Heart right ventricle (tissue), 16 donors: ENCODE measurements at regions of chr16 and their contacts with region 1.

Region 1: DNA sequence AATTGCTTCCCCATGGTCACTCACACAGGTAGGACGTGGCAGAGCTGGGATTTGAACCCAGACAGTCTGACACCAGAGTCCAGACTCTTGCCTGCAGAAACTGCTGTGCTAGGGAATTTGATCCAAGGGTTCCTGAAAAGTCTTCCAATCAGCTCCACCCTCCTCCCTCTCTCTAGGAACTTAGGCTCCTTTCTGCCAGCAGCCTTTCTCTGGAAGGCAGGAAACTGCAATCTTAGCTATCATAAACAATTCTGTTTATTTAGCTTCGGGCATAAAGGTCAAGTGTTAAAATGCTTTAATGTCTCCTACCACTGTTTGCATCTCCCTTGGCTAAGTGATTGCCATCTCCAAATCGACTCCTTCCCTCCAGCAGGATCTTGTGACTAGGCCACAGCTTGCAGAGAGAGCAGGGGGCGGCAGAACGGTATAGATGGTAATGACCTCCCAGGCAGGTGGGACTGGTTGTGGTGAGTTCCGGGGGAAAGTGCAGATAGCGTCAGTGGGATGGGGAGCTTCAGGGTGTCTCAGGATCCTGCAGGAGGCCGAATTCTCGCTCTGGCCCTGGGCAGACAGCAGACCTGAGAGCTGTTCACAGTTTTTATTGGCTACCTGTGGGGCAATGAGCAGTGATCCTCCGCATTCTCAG is 882.4 kb upstream of the EEF2KMT start:
- DNase-seq: no peak
- ATAC-seq: no peak
- H3K4me3 ChIP-seq: no peak overlapping the region
- H3K27ac ChIP-seq: no peak overlapping the region
- H3K4me1 ChIP-seq: no peaks in the 10 kb centered on the region
- H3K27me3 ChIP-seq: peaks cover 0 to 25% (median 0%) of the 10 kb centered on the region in 7 donors
- CTCF ChIP-seq: no peak

Region 2: DNA sequence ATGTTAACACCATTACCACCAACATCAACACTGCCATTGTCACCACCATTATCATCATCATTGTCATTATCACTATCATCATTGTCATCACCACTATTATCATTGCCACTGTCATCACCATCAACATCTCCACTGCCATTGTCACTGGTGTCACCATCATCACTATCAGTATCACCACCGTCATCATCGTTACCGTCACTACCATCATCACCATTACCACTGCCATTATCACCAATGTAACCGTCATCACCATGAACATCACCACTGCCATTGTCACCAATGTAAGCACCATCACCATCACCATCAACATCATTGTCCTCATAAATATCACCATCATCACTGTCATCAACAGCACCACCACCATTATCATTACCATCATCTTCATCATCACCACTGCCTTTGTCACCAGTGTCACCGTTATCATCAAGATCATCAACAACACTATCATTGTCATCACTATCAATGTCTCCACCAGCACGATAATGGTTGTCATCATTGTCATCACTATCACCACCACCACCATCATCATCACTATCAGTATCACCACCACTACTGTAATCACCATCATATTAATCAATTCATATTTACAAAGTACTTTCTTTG is 249.1 kb before region 1 on chr16:
- intact Hi-C with region 1: no loop called
- DNase-seq: no peak
- ATAC-seq: no peak
- H3K4me3 ChIP-seq: no peak overlapping the region
- H3K27ac ChIP-seq: no peak overlapping the region
- H3K4me1 ChIP-seq: no peaks in the 10 kb centered on the region
- H3K27me3 ChIP-seq: no peaks in the 10 kb centered on the region
- CTCF ChIP-seq: no peak

Region 3: DNA sequence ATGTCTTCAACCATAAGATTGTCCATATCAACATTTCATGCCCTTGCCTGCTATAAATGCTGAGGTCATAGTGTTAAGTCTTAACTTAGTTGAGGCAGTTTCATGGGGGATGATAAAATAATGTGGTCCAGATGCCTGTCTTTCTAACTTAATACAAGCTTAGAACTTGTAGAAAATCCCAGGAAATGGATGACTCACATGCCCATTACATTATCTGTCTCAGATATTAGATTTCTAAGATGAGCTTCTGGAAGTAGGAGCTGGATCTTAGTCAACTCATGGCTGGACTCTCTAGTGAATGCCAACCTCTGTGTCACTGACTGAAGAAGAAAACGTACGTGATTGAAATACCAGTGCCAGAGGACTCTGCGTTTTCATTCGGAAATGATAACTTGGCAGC is 84.9 kb before region 1 on chr16:
- intact Hi-C with region 1: no loop called
- DNase-seq: no peak
- ATAC-seq: no peak
- H3K4me3 ChIP-seq: no peak overlapping the region
- H3K27ac ChIP-seq: no peak overlapping the region
- H3K4me1 ChIP-seq: no peaks in the 10 kb centered on the region
- H3K27me3 ChIP-seq: no peaks in the 10 kb centered on the region
- CTCF ChIP-seq: no peak

Region 4: DNA sequence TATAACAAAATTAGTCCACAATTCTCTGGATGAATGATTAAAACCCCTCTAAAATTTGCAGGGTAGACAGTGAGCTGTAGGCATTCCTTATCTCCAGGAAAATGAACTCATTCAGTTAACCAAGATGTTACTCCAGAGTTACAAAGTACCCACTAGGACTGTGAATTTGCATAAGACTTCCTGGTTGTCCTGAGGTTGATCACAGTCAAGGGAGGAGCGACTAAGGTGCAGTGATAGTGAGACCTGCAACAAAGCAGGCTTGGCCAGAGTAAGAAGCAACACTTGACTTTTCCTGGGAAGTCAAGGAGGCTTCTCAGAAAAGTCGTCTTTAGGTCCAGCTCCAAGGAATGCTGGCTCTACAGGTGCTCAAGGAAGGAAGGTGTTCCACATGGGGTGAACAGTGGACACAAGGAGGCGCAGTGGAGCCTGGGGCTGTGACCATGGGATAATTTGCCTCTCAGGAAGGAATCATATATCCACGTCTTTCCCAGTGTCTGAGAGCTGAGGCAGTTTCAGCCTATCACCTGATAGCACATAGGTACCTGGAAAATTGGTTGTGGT is 61.4 kb before region 1 on chr16:
- intact Hi-C with region 1: loop called in 1 of 10 experiments (anchors 10 kb)
- DNase-seq: no peak
- ATAC-seq: no peak
- H3K4me3 ChIP-seq: no peak overlapping the region
- H3K27ac ChIP-seq: no peak overlapping the region
- H3K4me1 ChIP-seq: no peaks in the 10 kb centered on the region
- H3K27me3 ChIP-seq: peaks cover 0 to 6% (median 3%) of the 10 kb centered on the region in 7 donors
- CTCF ChIP-seq: no peak

Region 5: GRCh38 chr16:6035161-6035560 is 55.1 kb after region 1 on chr16:
- intact Hi-C with region 1: no loop called
- DNase-seq: no peak
- ATAC-seq: no peak
- H3K4me3 ChIP-seq: no peak overlapping the region
- H3K27ac ChIP-seq: no peak overlapping the region
- H3K4me1 ChIP-seq: no peaks in the 10 kb centered on the region
- H3K27me3 ChIP-seq: no peaks in the 10 kb centered on the region
- CTCF ChIP-seq: no peak